GM13976 (cell line): ENCODE measurements at regions of chr2 and their contacts with region 1.

Region 1: GRCh38 chr2:44955593-44956392 is 14.3 kb downstream of the SIX3 start:
- DNase-seq: peak; percentile 89
- CTCF ChIP-seq: peak; percentile 99

Region 2: GRCh38 chr2:44044281-44044720 is 911.5 kb before region 1 on chr2:
- in situ Hi-C with region 1: loop called (anchors 25 kb)
- DNase-seq: peak; percentile 87
- CTCF ChIP-seq: peak; percentile 98

Region 3: GRCh38 chr2:44450806-44451205 is 505.0 kb before region 1 on chr2:
- in situ Hi-C with region 1: no loop called
- DNase-seq: no peak
- CTCF ChIP-seq: no peak

Region 4: GRCh38 chr2:44479122-44479887 is 476.5 kb before region 1 on chr2:
- in situ Hi-C with region 1: loop called (anchors 10 kb)
- DNase-seq: peak; percentile 81
- CTCF ChIP-seq: peak; percentile 99

Region 5: GRCh38 chr2:44668336-44668735 is 287.5 kb before region 1 on chr2:
- in situ Hi-C with region 1: no loop called
- DNase-seq: peak; percentile 45
- CTCF ChIP-seq: peak; percentile 27

Region 6: DNA sequence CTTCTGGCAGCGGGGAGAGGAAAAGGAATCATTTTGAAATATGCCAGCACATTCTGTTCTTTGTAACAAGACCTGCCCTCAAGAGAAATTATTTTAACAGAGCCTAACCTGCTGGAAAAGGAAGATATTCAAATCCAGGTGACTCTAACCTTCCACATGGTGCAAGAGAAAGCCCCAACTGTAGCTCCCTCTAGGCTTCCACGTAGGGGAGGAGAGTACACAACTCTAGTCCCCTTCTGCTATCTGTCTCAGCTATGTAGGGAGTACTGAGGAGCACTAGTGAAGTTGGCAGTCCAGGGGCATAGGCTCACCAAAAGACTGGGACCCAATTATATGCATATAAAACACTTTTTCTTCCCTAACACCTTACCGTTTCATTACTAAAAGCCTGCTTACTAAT is 96.5 kb before region 1 on chr2:
- in situ Hi-C with region 1: no loop called
- DNase-seq: no peak
- CTCF ChIP-seq: no peak

Region 7: GRCh38 chr2:45380131-45380836 is 424.5 kb after region 1 on chr2:
- in situ Hi-C with region 1: no loop called
- DNase-seq: no peak
- CTCF ChIP-seq: no peak